A549 (cell line): ENCODE measurements at regions of chr2 and their contacts with region 1.

Region 1: GRCh38 chr2:133561045-133561852 is 7.0 kb downstream of the NCKAP5 start:
- DNase-seq: peak in 1 of 2 experiments; percentile 70
- ATAC-seq: peak; percentile 68 to 80; a peak in 3 of 6 replicates
- H3K4me3 ChIP-seq: no peak overlapping the region
- H3K27ac ChIP-seq: peak overlapping the region; percentile 27 to 78; a peak in 5 of 6 replicates
- H3K4me1 ChIP-seq: peaks cover 8% of the 10 kb centered on the region; the same call in 2 of the 3 replicates
- CTCF ChIP-seq: peak; percentile 81
- EP300 ChIP-seq: no peak
- POLR2A ChIP-seq: no peak
- RAD21 ChIP-seq: peak; percentile 82 to 93

Region 2: DNA sequence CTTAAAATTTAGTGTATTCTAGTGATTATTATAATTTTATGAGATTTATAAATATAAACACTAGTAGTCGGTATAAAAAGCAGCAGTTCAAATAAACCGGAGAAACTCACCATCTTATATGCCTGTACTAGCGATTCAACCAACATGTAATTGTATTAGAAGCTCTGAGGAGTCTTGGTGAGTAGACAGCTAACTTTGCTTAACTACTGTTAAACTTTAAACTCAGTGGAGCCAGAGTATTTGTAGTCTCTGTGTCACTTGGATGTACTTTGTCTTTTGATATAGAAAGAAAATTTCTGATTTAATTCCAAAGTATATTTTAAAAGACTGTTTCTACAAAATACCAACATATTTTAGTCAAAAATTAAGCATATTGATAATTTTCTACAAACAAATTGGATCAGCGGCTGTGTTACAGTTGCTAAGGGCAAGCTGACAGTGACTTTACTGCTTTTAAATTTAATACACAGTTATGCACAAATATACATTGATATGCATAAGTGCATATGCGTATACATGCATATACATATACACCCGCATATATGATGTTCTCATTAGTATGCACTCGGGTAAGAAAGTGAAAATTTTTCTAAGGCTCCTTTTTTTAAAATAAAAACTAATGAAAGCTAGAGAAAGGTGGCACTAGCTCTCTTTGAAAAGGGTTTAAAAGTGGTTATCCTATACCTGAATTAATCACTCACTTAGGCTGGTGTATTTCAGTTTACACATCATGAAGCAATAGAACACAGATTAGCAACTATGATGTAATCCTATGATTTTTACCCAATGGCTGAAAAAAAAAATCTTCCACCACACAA is 367.5 kb before region 1 on chr2:
- CTCF ChIA-PET with region 1: interaction called, 11 read pairs
- POLR2A ChIA-PET with region 1: no interaction called
- DNase-seq: peak in 1 of 2 experiments; percentile 20
- ATAC-seq: peak; percentile 42 to 74; a peak in 5 of 6 replicates
- H3K4me3 ChIP-seq: peak overlapping the region; percentile 15; the same call in 2 of the 3 replicates
- H3K27ac ChIP-seq: peak overlapping the region; percentile 66 to 81
- H3K4me1 ChIP-seq: peaks cover 53% of the 10 kb centered on the region
- CTCF ChIP-seq: peak; percentile 25; the same call in 2 of the 3 replicates
- EP300 ChIP-seq: no peak
- POLR2A ChIP-seq: no peak
- RAD21 ChIP-seq: peak in 1 of 2 experiments; percentile 63; a peak in 3 of 5 replicates

Region 3: DNA sequence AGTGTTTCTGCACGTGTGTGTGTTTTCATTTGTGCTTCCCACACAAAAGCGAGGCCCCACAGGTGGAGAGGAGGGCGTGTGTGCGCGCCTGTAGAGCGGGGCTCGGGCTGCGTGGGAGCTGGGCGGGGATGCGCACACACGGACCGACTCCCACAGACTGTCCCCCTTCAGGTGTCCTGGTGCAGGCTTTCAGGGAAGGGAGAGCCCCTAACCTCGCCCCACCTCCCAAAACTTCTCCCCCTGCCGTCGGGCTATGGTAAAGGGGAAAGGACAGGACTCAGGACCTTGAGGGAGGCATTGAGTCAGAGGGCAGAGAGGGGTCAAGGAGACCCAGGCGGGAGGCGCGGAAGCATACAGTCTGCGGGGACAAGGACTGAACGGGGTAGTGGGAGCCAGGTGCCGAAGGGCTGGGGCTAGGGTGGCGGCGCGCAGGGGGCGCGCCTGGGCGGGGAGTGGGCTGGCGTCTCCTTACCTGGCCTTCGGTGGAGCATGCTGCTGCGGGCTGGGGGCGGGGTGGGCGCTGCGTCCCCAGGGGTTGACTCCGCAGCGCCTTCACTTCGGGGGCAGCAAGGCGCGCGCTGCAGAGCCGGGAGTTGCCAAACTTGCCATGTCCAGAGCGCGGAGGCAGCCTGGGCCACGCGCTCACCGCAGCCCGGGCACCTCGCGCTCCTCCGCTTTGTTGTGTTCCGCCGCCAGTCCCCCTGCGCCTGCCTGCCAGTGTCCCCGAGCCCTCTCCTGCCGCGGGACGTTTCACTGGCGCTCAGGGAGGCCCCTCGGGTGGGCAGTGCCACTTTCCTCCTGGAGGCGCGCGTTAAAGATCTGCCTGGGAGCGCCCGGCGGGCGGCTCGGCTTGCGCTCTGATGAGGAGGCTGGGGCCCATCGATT is 295.0 kb before region 1 on chr2:
- CTCF ChIA-PET with region 1: interaction called, 35 read pairs
- POLR2A ChIA-PET with region 1: interaction called, 5 read pairs
- DNase-seq: peak; percentile 49 to 64
- ATAC-seq: peak; percentile 80 to 82
- H3K4me3 ChIP-seq: peak overlapping the region; percentile 74
- H3K27ac ChIP-seq: peak overlapping the region; percentile 89 to 98
- H3K4me1 ChIP-seq: peaks cover 53% of the 10 kb centered on the region
- CTCF ChIP-seq: peak; percentile 21; the same call in 2 of the 3 replicates
- EP300 ChIP-seq: no peak
- POLR2A ChIP-seq: no peak
- RAD21 ChIP-seq: peak; percentile 7 to 11; a peak in 1 of 5 replicates

Region 4: DNA sequence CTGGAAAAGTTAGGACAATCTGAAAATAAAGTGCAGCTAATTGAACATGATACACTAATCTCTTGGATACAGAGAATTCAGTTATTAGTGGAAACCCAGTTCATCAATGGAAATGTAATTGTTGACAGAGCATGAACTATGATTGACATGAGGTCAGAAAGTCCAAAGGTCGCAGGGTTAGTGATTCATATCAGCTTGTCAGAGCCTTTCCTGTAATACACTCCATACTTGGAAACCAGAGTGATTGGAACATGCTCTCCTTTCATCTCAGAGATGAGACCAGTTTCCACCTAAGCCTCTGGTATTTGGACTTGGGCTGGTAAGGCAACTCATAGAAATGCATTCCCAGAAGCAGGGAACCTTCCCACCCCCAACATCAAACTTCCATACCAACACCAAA is 15.5 kb after region 1 on chr2:
- CTCF ChIA-PET with region 1: interaction called, 16 read pairs
- POLR2A ChIA-PET with region 1: no interaction called
- DNase-seq: peak in 1 of 2 experiments; percentile 18
- ATAC-seq: peak in 1 of 2 experiments; percentile 61; a peak in 3 of 6 replicates
- H3K4me3 ChIP-seq: no peak overlapping the region
- H3K27ac ChIP-seq: peak overlapping the region in 1 of 2 experiments; percentile 76; a peak in 3 of 6 replicates
- H3K4me1 ChIP-seq: peaks cover 38% of the 10 kb centered on the region
- CTCF ChIP-seq: no peak
- EP300 ChIP-seq: no peak
- POLR2A ChIP-seq: no peak
- RAD21 ChIP-seq: no peak